ENCODE measurements at regions of chr10 and their contacts with region 1.

Region 1: DNA sequence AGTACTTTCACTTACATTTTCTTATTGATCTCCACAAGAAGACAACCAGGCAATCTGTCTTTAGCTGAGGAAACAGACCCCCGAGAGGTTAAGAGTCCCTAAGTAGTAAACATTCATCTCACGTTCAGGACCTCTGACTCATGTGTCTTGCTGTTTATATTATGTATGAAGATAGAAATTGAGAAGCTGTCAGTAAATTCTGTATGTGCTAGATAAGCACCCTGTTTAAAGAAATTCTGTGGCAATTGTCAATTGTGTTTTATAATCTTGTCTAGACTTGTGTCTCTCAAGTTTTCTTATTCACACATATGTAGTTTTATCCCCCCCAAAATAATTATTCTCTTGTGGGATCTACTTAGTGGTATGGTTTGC is 14.5 kb downstream of the ADK start:
- DNase-seq: no peak
- H3K4me3 Mint-ChIP-seq: no peak overlapping the region
- H3K27ac Mint-ChIP-seq: no peak overlapping the region
- H3K4me1 Mint-ChIP-seq: peaks cover 29% of the 10 kb centered on the region
- H3K27me3 Mint-ChIP-seq: no peaks in the 10 kb centered on the region

Region 2: GRCh38 chr10:74151056-74151878 is 14.2 kb before region 1 on chr10 and contains the start of gene ADK:
- CTCF ChIA-PET with region 1: interaction called, 10 read pairs
- POLR2A ChIA-PET with region 1: no interaction called
- DNase-seq: peak; percentile 100
- H3K4me3 Mint-ChIP-seq: no peak within 1 kb of the TSS
- H3K27ac Mint-ChIP-seq: peak within 1 kb of the TSS; percentile 39
- H3K4me1 Mint-ChIP-seq: peaks cover 26% of the 10 kb centered on the region
- H3K27me3 Mint-ChIP-seq: no peaks in the 10 kb centered on the region
- total RNA-seq, gene ADK: 36.8 to 38.5 TPM

Region 3: DNA sequence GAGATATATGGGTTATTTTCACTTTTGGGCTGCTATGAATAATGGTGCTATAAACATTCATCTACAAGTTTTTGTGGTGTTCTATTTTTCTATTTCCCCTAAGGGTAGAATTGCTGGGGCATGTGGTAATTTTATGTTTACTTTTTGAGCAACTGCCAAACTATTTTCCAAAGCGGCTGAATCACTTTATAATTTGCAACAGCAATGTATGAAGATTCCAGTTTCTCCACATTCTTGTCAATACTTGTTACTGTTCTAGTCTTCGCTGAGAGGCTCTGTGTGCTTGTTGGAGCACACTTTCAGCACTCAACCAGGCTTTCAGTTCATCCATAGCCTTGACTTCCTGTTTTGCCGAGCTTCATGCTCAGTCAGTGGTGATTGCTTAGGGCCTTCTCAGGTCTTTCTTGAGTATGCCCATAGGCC is 24.5 kb after region 1 on chr10:
- CTCF ChIA-PET with region 1: interaction called, 10 read pairs
- POLR2A ChIA-PET with region 1: interaction called, 4 read pairs
- DNase-seq: peak; percentile 43
- H3K4me3 Mint-ChIP-seq: peak overlapping the region; percentile 47
- H3K27ac Mint-ChIP-seq: peak overlapping the region; percentile 98
- H3K4me1 Mint-ChIP-seq: peaks cover 62% of the 10 kb centered on the region
- H3K27me3 Mint-ChIP-seq: no peaks in the 10 kb centered on the region

Region 4: DNA sequence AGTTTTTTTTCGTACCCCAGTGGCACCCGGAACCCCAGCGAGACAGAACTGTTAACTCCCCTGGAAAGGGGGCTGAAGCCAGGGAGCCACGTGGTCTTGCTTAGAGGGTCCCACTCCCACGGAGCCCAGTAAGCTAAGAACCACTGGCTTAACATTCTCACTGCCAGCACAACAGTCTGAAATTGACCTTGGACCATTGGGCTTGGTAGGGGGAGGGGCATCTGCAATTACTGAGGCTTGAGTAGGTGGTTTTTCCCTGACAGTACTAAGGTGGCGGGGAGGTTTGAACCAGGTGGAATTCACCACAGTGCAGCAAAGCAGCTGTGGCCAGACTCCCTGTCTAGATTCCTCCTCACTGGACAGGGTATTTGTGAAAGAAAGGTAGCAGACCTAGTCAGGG is 182.0 kb after region 1 on chr10:
- CTCF ChIA-PET with region 1: no interaction called
- POLR2A ChIA-PET with region 1: no interaction called
- DNase-seq: no peak
- H3K4me3 Mint-ChIP-seq: no peak overlapping the region
- H3K27ac Mint-ChIP-seq: no peak overlapping the region
- H3K4me1 Mint-ChIP-seq: no peaks in the 10 kb centered on the region
- H3K27me3 Mint-ChIP-seq: no peaks in the 10 kb centered on the region

Region 5: GRCh38 chr10:74483356-74483755 is 317.8 kb after region 1 on chr10:
- CTCF ChIA-PET with region 1: no interaction called
- POLR2A ChIA-PET with region 1: no interaction called
- DNase-seq: no peak
- H3K4me3 Mint-ChIP-seq: no peak overlapping the region
- H3K27ac Mint-ChIP-seq: no peak overlapping the region
- H3K4me1 Mint-ChIP-seq: peaks cover 2% of the 10 kb centered on the region
- H3K27me3 Mint-ChIP-seq: no peaks in the 10 kb centered on the region

Measured in activated CD4-positive, alpha-beta T cell treated with anti-CD3 and anti-CD28 coated beads, Interleukin-2, amount 10 ng/mL, durations not matched to agents 7 days and 5 days (primary cell).